ENCODE measurements at regions of chr13 and their contacts with region 1.

Region 1: DNA sequence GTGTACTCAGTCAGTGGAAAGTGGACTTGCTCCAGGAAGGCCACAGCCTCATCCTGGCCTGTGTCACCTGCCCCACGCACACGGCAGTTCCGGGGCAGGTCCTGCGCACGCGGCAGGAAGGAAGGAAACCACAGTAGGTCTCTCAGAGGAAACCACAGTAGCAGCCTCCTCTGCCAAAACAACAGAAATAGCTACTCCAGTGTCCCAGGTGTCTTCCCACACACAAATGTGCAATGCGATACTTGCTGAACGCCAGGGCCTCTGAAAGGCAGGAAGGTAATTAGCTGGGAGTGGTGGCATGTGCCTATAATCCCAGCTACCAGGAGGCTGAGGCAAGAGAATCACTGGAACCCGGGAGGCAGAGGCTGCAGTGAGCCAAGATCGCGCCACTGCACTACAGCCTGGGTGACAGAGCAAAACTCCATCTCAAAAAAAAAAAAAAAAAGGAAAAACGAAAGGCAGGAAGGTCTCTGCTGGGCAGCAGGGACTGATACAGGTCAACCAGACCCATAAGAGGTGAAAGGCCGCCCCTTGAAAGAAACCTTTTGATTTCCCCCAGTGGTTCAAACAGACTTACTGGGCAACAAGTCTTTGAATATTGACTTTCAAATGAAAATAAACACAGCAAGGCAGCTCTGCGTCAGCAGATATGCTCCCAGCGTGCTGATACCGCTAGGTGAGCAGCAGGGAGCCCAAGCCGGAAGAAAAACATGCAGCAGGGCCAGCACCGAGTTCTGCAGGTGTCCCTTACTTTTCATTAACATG is 49.5 kb downstream of the CRYL1 start:
- DNase-seq: peak; percentile 78 to 87 (median 85)
- H3K4me3 ChIP-seq: peak overlapping the region; percentile 26 to 39
- H3K4me3 Mint-ChIP-seq: peak overlapping the region; percentile 83 to 92 (median 87)
- H3K27ac ChIP-seq: peak overlapping the region; percentile 54
- H3K27ac Mint-ChIP-seq: peak overlapping the region; percentile 93 to 98 (median 96)
- H3K4me1 ChIP-seq: peaks cover 29% of the 10 kb centered on the region
- H3K4me1 Mint-ChIP-seq: peaks cover 23 to 44% (median 34%) of the 10 kb centered on the region in 4 donors
- H3K27me3 ChIP-seq: no peaks in the 10 kb centered on the region
- H3K27me3 Mint-ChIP-seq: no peaks in the 10 kb centered on the region

Region 2: GRCh38 chr13:19959831-19960652 is 516.1 kb before region 1 on chr13:
- CTCF ChIA-PET with region 1: no interaction called
- POLR2A ChIA-PET with region 1: no interaction called
- intact Hi-C with region 1: loop called (anchors 5 kb)
- DNase-seq: peak; percentile 85 to 94 (median 89)
- H3K4me3 ChIP-seq: peak overlapping the region; percentile 51 to 53
- H3K4me3 Mint-ChIP-seq: peak overlapping the region; percentile 93 to 98 (median 94)
- H3K27ac ChIP-seq: peak overlapping the region; percentile 90
- H3K27ac Mint-ChIP-seq: peak overlapping the region; percentile 93 to 99 (median 96)
- H3K4me1 ChIP-seq: peaks cover 50% of the 10 kb centered on the region
- H3K4me1 Mint-ChIP-seq: peaks cover 20 to 40% (median 31%) of the 10 kb centered on the region in 4 donors
- H3K27me3 ChIP-seq: no peaks in the 10 kb centered on the region
- H3K27me3 Mint-ChIP-seq: no peaks in the 10 kb centered on the region

Region 3: DNA sequence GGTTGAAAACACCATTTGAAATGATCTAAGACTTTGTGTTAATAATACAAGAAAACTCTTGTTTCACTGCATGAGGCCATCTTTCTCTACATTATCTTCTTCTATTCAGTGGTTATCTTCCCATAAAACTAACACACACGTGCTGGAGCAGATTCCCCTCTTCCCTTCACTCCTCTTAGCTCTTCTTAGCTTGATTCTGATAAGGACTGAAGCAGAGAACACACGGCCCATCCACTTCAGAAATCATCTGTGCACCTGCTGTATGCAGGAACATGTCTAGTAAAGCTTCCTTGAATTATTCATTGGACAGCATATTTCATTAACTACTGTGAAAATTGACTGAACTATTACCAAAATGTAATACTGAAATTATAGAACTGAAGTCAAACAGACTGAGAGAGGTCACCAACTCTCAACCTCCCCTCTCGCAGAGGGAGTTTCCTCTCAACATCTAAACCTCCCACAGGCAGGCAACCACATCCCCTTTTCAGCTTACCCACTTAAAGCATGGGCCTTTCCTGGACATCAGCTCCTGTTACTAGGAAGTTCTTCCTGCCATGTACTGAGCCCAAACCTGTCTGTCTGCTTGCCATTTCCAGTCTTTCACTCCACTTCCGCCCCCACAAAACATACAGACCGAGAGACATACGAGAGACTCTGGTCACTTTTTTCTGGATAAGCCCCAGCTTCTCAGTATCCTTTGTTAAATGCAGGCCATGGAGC is 64.3 kb before region 1 on chr13:
- CTCF ChIA-PET with region 1: no interaction called
- POLR2A ChIA-PET with region 1: interaction called, 13 read pairs
- intact Hi-C with region 1: loop called (anchors 1 kb)
- DNase-seq: peak; percentile 27 to 57 (median 40)
- H3K4me3 ChIP-seq: no peak overlapping the region
- H3K4me3 Mint-ChIP-seq: peak overlapping the region in 7 of 8 donors; percentile 26 to 77 (median 67)
- H3K27ac ChIP-seq: peak overlapping the region; percentile 16
- H3K27ac Mint-ChIP-seq: peak overlapping the region; percentile 34 to 93 (median 83)
- H3K4me1 ChIP-seq: peaks cover 27% of the 10 kb centered on the region
- H3K4me1 Mint-ChIP-seq: peaks cover 19 to 26% (median 23%) of the 10 kb centered on the region in 4 donors
- H3K27me3 ChIP-seq: no peaks in the 10 kb centered on the region
- H3K27me3 Mint-ChIP-seq: no peaks in the 10 kb centered on the region

Region 4: GRCh38 chr13:20525690-20526544 is 49.8 kb after region 1 on chr13 and contains the start of gene CRYL1:
- CTCF ChIA-PET with region 1: no interaction called
- POLR2A ChIA-PET with region 1: interaction called, 5 read pairs
- intact Hi-C with region 1: loop called (anchors 1 kb)
- DNase-seq: peak; percentile 62 to 74 (median 71)
- H3K4me3 ChIP-seq: peak within 1 kb of the TSS; percentile 49 to 83
- H3K4me3 Mint-ChIP-seq: peak within 1 kb of the TSS; percentile 88 to 97 (median 92)
- H3K27ac ChIP-seq: peak within 1 kb of the TSS; percentile 73
- H3K27ac Mint-ChIP-seq: peak within 1 kb of the TSS; percentile 65 to 97 (median 89)
- H3K4me1 ChIP-seq: peaks cover 14% of the 10 kb centered on the region
- H3K4me1 Mint-ChIP-seq: peaks cover 12 to 29% (median 22%) of the 10 kb centered on the region in 4 donors
- H3K27me3 ChIP-seq: no peaks in the 10 kb centered on the region
- H3K27me3 Mint-ChIP-seq: peaks cover 0 to 5% of the 10 kb centered on the region in 2 donors
- total RNA-seq, gene CRYL1: 18.1 to 22.1 TPM

Region 5: GRCh38 chr13:20703780-20704445 is 227.8 kb after region 1 on chr13:
- CTCF ChIA-PET with region 1: interaction called, 3 read pairs
- POLR2A ChIA-PET with region 1: interaction called, 4 read pairs
- intact Hi-C with region 1: loop called (anchors 2 kb)
- DNase-seq: peak; percentile 78 to 83 (median 81)
- H3K4me3 ChIP-seq: no peak overlapping the region
- H3K4me3 Mint-ChIP-seq: no peak overlapping the region
- H3K27ac ChIP-seq: no peak overlapping the region
- H3K27ac Mint-ChIP-seq: no peak overlapping the region
- H3K4me1 ChIP-seq: peaks cover 7% of the 10 kb centered on the region
- H3K4me1 Mint-ChIP-seq: peaks cover 3 to 14% (median 8%) of the 10 kb centered on the region in 4 donors
- H3K27me3 ChIP-seq: peaks cover 30% of the 10 kb centered on the region
- H3K27me3 Mint-ChIP-seq: peaks cover 11 to 22% of the 10 kb centered on the region in 2 donors

Measured in CD4-positive, alpha-beta memory T cell (primary cell).